ENCODE measurements at regions of chr5 and their contacts with region 1.

Region 1: DNA sequence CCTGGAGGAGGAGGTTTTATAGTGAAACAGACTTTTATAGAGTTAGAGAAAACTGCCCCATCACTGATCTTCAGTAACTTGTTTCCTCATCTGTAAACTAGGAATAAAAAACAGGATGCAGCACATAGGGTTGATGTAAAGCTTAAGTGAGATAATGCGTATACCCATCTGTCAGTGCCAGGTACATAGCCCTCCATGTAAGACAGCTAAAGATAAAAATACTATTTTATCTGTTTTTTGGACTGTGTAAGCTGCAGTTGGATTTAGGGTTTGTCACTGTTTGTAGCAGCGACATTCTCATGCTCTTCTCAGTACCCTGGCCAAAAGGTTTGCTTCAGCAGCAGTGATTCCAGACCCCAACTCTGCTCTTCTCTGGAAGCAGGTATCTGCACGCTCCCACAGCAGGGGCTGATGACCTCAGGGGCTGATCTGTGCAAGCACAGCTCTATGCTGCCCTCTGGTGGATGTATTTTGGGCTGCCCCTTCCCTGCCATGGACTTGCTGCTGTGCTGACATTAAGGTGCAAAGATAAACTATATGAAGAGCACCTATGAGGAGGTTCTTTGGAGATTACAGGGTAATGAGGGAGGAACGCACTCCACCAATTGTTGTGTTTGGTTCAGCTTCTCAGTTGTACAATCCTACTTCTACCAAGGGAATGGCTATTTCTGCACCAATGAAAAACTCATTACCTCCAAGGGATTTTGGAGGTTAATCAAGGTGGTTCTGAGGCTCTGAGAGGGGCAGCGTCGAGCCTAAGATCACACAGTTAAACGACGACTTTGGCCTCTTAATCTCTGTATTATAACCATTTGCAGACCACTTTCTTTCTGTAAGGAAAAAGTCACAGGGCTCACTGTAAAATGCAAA is 13.1 kb downstream of the HMHB1 start:
- DNase-seq: peak; percentile 75 to 91 (median 82)
- ATAC-seq: peak; percentile 94
- H3K4me3 ChIP-seq: no peak overlapping the region
- H3K4me3 Mint-ChIP-seq: no peak overlapping the region
- H3K27ac ChIP-seq: no peak overlapping the region
- H3K27ac Mint-ChIP-seq: no peak overlapping the region
- H3K4me1 ChIP-seq: peaks cover 13% of the 10 kb centered on the region
- H3K4me1 Mint-ChIP-seq: peaks cover 17% of the 10 kb centered on the region
- H3K27me3 ChIP-seq: no peaks in the 10 kb centered on the region
- H3K27me3 Mint-ChIP-seq: peaks cover 4% of the 10 kb centered on the region
- CTCF ChIP-seq: peak; percentile 86

Region 2: GRCh38 chr5:142713121-142713706 is 1111.9 kb before region 1 on chr5:
- CTCF ChIA-PET with region 1: no interaction called
- POLR2A ChIA-PET with region 1: no interaction called
- intact Hi-C with region 1: loop called (anchors 10 kb)
- DNase-seq: peak; percentile 70 to 93 (median 79)
- ATAC-seq: peak; percentile 93
- H3K4me3 ChIP-seq: peak overlapping the region; percentile 50
- H3K4me3 Mint-ChIP-seq: peak overlapping the region; percentile 76
- H3K27ac ChIP-seq: no peak overlapping the region
- H3K27ac Mint-ChIP-seq: no peak overlapping the region
- H3K4me1 ChIP-seq: peaks cover 15% of the 10 kb centered on the region
- H3K4me1 Mint-ChIP-seq: peaks cover 17% of the 10 kb centered on the region
- H3K27me3 ChIP-seq: peaks cover 0 to 3% of the 10 kb centered on the region in 2 experiments
- H3K27me3 Mint-ChIP-seq: peaks cover 9% of the 10 kb centered on the region
- CTCF ChIP-seq: peak; percentile 99

Region 3: GRCh38 chr5:142922223-142922952 is 902.7 kb before region 1 on chr5:
- CTCF ChIA-PET with region 1: interaction called, 3 read pairs
- POLR2A ChIA-PET with region 1: interaction called, 3 read pairs
- intact Hi-C with region 1: loop called (anchors 2 kb)
- DNase-seq: peak in 3 of 14 experiments; percentile 49 to 61 (median 50)
- ATAC-seq: no peak
- H3K4me3 ChIP-seq: no peak overlapping the region
- H3K4me3 Mint-ChIP-seq: no peak overlapping the region
- H3K27ac ChIP-seq: no peak overlapping the region
- H3K27ac Mint-ChIP-seq: no peak overlapping the region
- H3K4me1 ChIP-seq: no peaks in the 10 kb centered on the region
- H3K4me1 Mint-ChIP-seq: peaks cover 22% of the 10 kb centered on the region
- H3K27me3 ChIP-seq: no peaks in the 10 kb centered on the region
- H3K27me3 Mint-ChIP-seq: no peaks in the 10 kb centered on the region
- CTCF ChIP-seq: peak; percentile 50

Region 4: GRCh38 chr5:143016777-143017516 is 808.1 kb before region 1 on chr5:
- CTCF ChIA-PET with region 1: interaction called, 3 read pairs
- POLR2A ChIA-PET with region 1: no interaction called
- intact Hi-C with region 1: loop called in 1 of 2 experiments (anchors 5 kb)
- DNase-seq: peak in 10 of 14 experiments; percentile 14 to 68 (median 38)
- ATAC-seq: peak; percentile 34
- H3K4me3 ChIP-seq: no peak overlapping the region
- H3K4me3 Mint-ChIP-seq: no peak overlapping the region
- H3K27ac ChIP-seq: no peak overlapping the region
- H3K27ac Mint-ChIP-seq: no peak overlapping the region
- H3K4me1 ChIP-seq: no peaks in the 10 kb centered on the region
- H3K4me1 Mint-ChIP-seq: peaks cover 5% of the 10 kb centered on the region
- H3K27me3 ChIP-seq: no peaks in the 10 kb centered on the region
- H3K27me3 Mint-ChIP-seq: no peaks in the 10 kb centered on the region
- CTCF ChIP-seq: peak; percentile 17

Region 5: GRCh38 chr5:143195491-143195890 is 629.6 kb before region 1 on chr5:
- CTCF ChIA-PET with region 1: no interaction called
- POLR2A ChIA-PET with region 1: no interaction called
- intact Hi-C with region 1: loop called in 1 of 2 experiments (anchors 5 kb)
- DNase-seq: no peak
- ATAC-seq: no peak
- H3K4me3 ChIP-seq: no peak overlapping the region
- H3K4me3 Mint-ChIP-seq: no peak overlapping the region
- H3K27ac ChIP-seq: no peak overlapping the region
- H3K27ac Mint-ChIP-seq: no peak overlapping the region
- H3K4me1 ChIP-seq: no peaks in the 10 kb centered on the region
- H3K4me1 Mint-ChIP-seq: no peaks in the 10 kb centered on the region
- H3K27me3 ChIP-seq: no peaks in the 10 kb centered on the region
- H3K27me3 Mint-ChIP-seq: no peaks in the 10 kb centered on the region
- CTCF ChIP-seq: no peak

Region 6: DNA sequence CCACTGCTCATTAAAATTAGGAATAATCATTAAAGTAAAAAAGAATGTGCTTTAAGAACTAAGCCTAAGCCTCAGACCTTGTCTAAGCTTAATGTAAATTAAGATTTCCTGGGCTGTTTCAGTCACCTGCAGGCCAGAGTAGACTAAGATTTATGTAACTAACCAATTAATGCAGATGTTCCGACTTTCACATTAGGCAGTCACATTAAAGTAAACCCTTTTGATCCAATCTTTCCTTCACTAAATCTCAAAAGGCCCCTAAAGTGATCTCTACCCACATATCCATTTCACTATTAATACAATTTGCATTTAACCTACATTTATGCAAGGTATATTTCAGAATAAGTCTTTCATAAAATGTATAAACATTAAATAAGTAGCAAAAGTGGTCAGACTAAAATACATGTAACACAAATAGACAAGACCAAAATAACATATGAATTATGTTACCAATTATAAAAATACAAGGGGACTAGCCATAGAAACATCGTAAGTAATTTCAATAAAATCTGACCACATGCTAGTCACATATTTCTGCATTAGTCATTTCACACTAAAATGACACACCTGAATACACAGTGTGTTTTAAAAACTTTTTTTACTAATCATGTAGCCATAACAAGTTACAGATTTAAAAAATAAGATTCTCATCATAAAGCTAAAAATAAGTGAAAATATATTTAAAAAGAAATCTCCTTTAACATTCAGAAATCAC is 429.3 kb before region 1 on chr5:
- CTCF ChIA-PET with region 1: interaction called, 3 read pairs
- POLR2A ChIA-PET with region 1: no interaction called
- intact Hi-C with region 1: loop called in 1 of 2 experiments (anchors 2 kb)
- DNase-seq: no peak
- ATAC-seq: no peak
- H3K4me3 ChIP-seq: peak overlapping the region; percentile 11
- H3K4me3 Mint-ChIP-seq: peak overlapping the region; percentile 96
- H3K27ac ChIP-seq: no peak overlapping the region
- H3K27ac Mint-ChIP-seq: no peak overlapping the region
- H3K4me1 ChIP-seq: peaks cover 17% of the 10 kb centered on the region
- H3K4me1 Mint-ChIP-seq: peaks cover 84% of the 10 kb centered on the region
- H3K27me3 ChIP-seq: no peaks in the 10 kb centered on the region
- H3K27me3 Mint-ChIP-seq: no peaks in the 10 kb centered on the region
- CTCF ChIP-seq: no peak